HepG2 (cell line): ENCODE measurements at regions of chr1 and their contacts with region 1.

Region 1: GRCh38 chr1:239337776-239338430 is 48.5 kb upstream of the CHRM3 start:
- DNase-seq: no peak
- ATAC-seq: no peak
- H3K4me3 ChIP-seq: no peak overlapping the region
- H3K27ac ChIP-seq: no peak overlapping the region
- H3K4me1 ChIP-seq: no peaks in the 10 kb centered on the region
- H3K27me3 ChIP-seq: no peaks in the 10 kb centered on the region
- CTCF ChIP-seq: no peak
- EP300 ChIP-seq: no peak
- POLR2A ChIP-seq: no peak
- RAD21 ChIP-seq: no peak

Region 2: DNA sequence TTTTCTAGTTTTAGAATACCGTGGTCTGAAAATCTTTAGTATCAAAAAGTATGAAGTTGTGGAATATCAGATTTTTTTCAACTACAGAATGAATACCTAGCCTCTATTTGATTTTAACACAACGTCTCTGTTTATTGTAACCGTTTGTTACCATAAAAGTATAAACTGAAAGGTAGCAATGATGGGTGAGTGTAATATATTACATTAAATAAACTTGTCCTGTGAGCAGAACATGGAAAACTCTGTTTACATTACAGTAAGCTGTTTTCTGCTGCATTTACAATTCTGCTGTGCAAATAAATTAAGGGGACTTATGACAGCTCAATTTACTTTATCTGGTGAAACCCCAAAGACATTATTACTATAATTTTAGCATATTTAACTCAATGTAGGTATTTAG is 111.0 kb after region 1 on chr1:
- CTCF ChIA-PET with region 1: no interaction called
- POLR2A ChIA-PET with region 1: no interaction called
- in situ Hi-C with region 1: no loop called
- intact Hi-C with region 1: no loop called
- DNase-seq: no peak
- ATAC-seq: no peak
- H3K4me3 ChIP-seq: no peak overlapping the region
- H3K27ac ChIP-seq: no peak overlapping the region
- H3K4me1 ChIP-seq: no peaks in the 10 kb centered on the region
- H3K27me3 ChIP-seq: no peaks in the 10 kb centered on the region
- CTCF ChIP-seq: no peak
- EP300 ChIP-seq: no peak
- POLR2A ChIP-seq: no peak
- RAD21 ChIP-seq: no peak

Region 3: DNA sequence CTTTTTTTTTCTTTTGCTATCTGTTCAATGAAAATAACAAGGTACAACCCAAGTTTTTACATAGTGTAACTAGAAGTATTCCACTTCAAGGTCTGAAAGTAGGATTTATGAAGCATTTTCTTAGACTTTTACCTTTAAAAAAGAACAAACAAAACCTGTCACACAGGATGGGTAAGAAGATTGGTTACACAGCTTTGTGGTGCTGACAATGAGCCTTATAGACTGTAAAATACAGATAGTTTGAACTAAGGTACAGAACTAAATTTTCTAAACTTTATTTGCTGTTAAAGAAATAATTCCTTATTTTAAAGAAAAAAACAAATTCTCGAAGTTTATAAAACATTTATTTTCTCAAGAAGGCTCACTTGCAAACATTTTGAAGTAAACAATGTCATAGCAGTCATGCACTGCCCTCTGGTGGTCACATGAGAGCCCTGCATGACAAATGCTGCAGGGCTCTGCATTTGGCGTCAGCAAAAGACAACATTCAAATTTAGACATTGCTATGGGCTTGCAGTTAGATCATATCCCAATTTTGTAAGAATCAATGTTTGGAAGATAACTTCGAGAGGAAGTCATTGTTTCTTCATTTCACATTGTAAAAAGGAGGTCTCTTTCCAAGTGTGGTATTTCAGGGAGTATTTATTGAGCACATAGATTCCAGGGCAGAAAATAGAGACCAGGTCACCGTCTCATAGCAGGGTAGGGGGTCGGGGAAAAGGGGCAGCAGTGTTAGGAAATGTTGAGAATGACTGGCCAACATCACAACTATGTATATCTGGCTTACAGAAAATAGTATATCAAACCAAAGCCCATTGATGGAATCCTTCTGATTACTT is 638.4 kb after region 1 on chr1:
- CTCF ChIA-PET with region 1: no interaction called
- POLR2A ChIA-PET with region 1: no interaction called
- in situ Hi-C with region 1: no loop called
- intact Hi-C with region 1: loop called (anchors 5 kb)
- DNase-seq: peak; percentile 35
- ATAC-seq: peak; percentile 62
- H3K4me3 ChIP-seq: no peak overlapping the region
- H3K27ac ChIP-seq: no peak overlapping the region
- H3K4me1 ChIP-seq: no peaks in the 10 kb centered on the region
- H3K27me3 ChIP-seq: no peaks in the 10 kb centered on the region
- CTCF ChIP-seq: peak; percentile 68
- EP300 ChIP-seq: no peak
- POLR2A ChIP-seq: no peak
- RAD21 ChIP-seq: 0 out of 2 replicates have a peak, but pooled peaks have one; percentile 12